Caco-2 (cell line): ENCODE measurements at regions of chr11 and their contacts with region 1.

Region 1: DNA sequence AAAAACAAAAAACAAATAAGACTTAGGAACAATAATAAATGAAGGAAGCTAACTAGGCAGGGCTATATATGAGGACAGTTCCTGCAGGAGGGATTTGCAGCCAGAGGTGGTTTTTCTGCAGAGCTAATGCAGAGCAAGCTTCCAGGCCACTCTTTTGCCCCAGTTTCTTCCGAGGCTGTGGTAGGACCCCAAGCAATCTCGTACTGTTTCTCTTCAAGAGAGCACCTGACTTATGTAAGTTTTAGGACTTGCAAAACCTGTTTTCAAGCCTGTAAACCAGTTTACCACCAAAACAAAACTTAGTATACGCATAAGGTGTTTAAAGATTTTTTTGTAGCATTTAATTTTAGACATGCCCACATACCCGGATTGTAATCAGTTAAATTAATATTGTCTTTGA is 7.7 kb upstream of the APLP2 start:
- DNase-seq: no peak
- H3K4me3 ChIP-seq: no peak overlapping the region
- H3K4me3 Mint-ChIP-seq: no peak overlapping the region
- H3K27ac Mint-ChIP-seq: no peak overlapping the region
- H3K4me1 ChIP-seq: peaks cover 26% of the 10 kb centered on the region
- H3K4me1 Mint-ChIP-seq: peaks cover 17% of the 10 kb centered on the region
- H3K27me3 ChIP-seq: no peaks in the 10 kb centered on the region
- H3K27me3 Mint-ChIP-seq: no peaks in the 10 kb centered on the region
- CTCF ChIP-seq: no peak

Region 2: GRCh38 chr11:130043306-130043974 is 18.5 kb before region 1 on chr11:
- CTCF ChIA-PET with region 1: interaction called, 11 read pairs
- POLR2A ChIA-PET with region 1: no interaction called
- intact Hi-C with region 1: no loop called
- DNase-seq: no peak
- H3K4me3 ChIP-seq: no peak overlapping the region
- H3K4me3 Mint-ChIP-seq: no peak overlapping the region
- H3K27ac Mint-ChIP-seq: no peak overlapping the region
- H3K4me1 ChIP-seq: no peaks in the 10 kb centered on the region
- H3K4me1 Mint-ChIP-seq: peaks cover 16% of the 10 kb centered on the region
- H3K27me3 ChIP-seq: no peaks in the 10 kb centered on the region
- H3K27me3 Mint-ChIP-seq: no peaks in the 10 kb centered on the region
- CTCF ChIP-seq: no peak